ENCODE measurements at regions of chr9 and their contacts with region 1.

Region 1: DNA sequence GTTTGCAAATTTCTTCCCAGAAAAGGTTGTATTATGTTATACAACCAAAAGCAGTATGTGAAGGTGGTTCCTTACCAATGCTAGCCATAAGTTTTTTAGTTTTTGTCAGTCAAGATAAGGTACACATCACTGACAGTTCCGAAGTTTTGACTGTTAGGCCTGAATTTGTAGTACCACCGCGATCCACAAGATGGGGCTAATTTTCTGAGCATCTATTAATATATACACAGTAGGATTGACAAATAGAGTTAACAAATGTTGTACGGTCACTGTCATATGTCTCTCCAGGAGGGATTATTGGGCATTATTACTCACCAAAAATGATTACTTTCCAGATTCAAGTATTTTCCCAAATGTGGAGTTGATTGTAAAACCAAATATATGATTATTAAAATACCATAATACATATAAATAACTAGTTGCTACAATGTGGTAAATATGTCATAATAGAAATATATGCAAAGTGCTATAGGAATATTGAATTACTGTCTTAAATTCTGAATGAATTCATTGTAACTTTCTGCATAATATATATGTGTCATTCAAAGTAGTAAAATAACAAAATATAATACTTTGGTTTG is 28.4 kb upstream of the LRRC19 start:
- DNase-seq: no peak
- ATAC-seq: peak; percentile 56

Region 2: GRCh38 chr9:27204578-27204977 is 170.7 kb after region 1 on chr9:
- intact Hi-C with region 1: loop called (anchors 10 kb)
- DNase-seq: no peak
- ATAC-seq: no peak

Region 3: GRCh38 chr9:27276193-27277030 is 242.5 kb after region 1 on chr9:
- intact Hi-C with region 1: loop called (anchors 1 kb)
- DNase-seq: no peak
- ATAC-seq: peak; percentile 54